CD8-positive, alpha-beta T cell (primary cell): ENCODE measurements at regions of chr13 and their contacts with region 1.

Region 1: GRCh38 chr13:73765651-73766384 is 368.4 kb downstream of the KLF12 start:
- DNase-seq: peak; percentile 65 to 94 (median 86)
- ATAC-seq: peak; percentile 89
- H3K4me3 ChIP-seq: peak overlapping the region; percentile 28 to 56
- H3K4me3 Mint-ChIP-seq: peak overlapping the region; percentile 81
- H3K27ac ChIP-seq: peak overlapping the region; percentile 73 to 86
- H3K27ac Mint-ChIP-seq: peak overlapping the region; percentile 98
- H3K4me1 ChIP-seq: peaks cover 77% of the 10 kb centered on the region
- H3K4me1 Mint-ChIP-seq: peaks cover 85% of the 10 kb centered on the region
- H3K27me3 ChIP-seq: no peaks in the 10 kb centered on the region
- H3K27me3 Mint-ChIP-seq: no peaks in the 10 kb centered on the region
- CTCF ChIP-seq: no peak

Region 2: GRCh38 chr13:73776151-73776785 is 10.4 kb after region 1 on chr13:
- CTCF ChIA-PET with region 1: interaction called, 20 read pairs
- POLR2A ChIA-PET with region 1: interaction called, 9 read pairs
- intact Hi-C with region 1: loop called in 1 of 2 experiments (anchors 1 kb)
- DNase-seq: no peak
- ATAC-seq: no peak
- H3K4me3 ChIP-seq: no peak overlapping the region
- H3K4me3 Mint-ChIP-seq: no peak overlapping the region
- H3K27ac ChIP-seq: no peak overlapping the region
- H3K27ac Mint-ChIP-seq: peak overlapping the region; percentile 24
- H3K4me1 ChIP-seq: peaks cover 13% of the 10 kb centered on the region
- H3K4me1 Mint-ChIP-seq: peaks cover 36% of the 10 kb centered on the region
- H3K27me3 ChIP-seq: no peaks in the 10 kb centered on the region
- H3K27me3 Mint-ChIP-seq: no peaks in the 10 kb centered on the region
- CTCF ChIP-seq: no peak

Region 3: DNA sequence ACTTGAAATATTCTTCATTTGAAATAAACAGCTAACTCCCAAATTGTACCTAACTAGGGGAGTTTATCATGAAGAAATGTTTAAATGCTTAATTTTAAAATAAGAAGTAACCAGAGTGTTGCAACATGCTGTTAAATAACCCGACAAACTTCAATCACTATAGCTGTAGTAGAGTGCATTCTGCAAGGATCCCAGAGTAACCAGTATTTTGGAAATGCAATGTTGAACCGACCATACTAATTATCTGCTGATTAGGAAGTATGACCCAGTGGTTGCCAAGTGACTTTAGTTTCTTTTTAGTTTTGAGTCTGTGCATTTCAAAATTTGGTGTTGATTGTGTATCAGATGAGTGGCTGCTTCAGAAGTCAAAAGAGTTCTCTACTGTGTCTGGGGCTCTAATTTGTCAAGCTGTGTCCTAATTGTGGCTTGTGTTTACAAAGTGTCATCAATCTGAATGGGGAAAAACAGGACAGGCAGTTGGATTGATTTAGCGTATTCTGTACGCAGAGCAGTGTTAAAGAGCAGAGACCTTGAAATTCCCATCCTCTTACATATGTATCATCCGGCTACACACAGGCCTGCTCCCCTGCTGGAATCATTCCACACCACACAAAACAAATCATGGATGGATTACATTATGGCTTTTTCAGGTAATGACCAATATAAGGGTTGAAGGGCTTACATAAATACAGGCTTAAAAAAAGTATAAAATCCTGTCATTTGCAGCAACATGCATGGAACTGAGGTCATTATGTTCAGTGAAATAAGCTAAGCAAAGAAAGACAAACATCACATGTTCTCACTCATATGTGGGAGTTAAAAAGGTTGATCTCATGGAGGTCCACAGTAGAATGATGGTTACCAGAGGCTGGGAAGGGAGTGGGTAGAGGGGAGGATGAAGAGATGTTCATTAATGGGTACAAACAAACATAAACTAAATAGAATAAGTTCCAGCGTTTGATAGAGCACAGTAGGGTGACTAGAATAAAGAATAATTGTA is 16.9 kb after region 1 on chr13:
- CTCF ChIA-PET with region 1: interaction called, 20 read pairs
- POLR2A ChIA-PET with region 1: interaction called, 6 read pairs
- intact Hi-C with region 1: loop called in 1 of 2 experiments (anchors 2 kb)
- DNase-seq: no peak
- ATAC-seq: no peak
- H3K4me3 ChIP-seq: no peak overlapping the region
- H3K4me3 Mint-ChIP-seq: no peak overlapping the region
- H3K27ac ChIP-seq: no peak overlapping the region
- H3K27ac Mint-ChIP-seq: peak overlapping the region; percentile 81
- H3K4me1 ChIP-seq: no peaks in the 10 kb centered on the region
- H3K4me1 Mint-ChIP-seq: peaks cover 41% of the 10 kb centered on the region
- H3K27me3 ChIP-seq: no peaks in the 10 kb centered on the region
- H3K27me3 Mint-ChIP-seq: no peaks in the 10 kb centered on the region
- CTCF ChIP-seq: no peak

Region 4: GRCh38 chr13:73816702-73817101 is 50.9 kb after region 1 on chr13:
- CTCF ChIA-PET with region 1: no interaction called
- POLR2A ChIA-PET with region 1: interaction called, 4 read pairs
- intact Hi-C with region 1: loop called in 1 of 2 experiments (anchors 10 kb)
- DNase-seq: no peak
- ATAC-seq: no peak
- H3K4me3 ChIP-seq: no peak overlapping the region
- H3K4me3 Mint-ChIP-seq: no peak overlapping the region
- H3K27ac ChIP-seq: no peak overlapping the region
- H3K27ac Mint-ChIP-seq: no peak overlapping the region
- H3K4me1 ChIP-seq: no peaks in the 10 kb centered on the region
- H3K4me1 Mint-ChIP-seq: peaks cover 55% of the 10 kb centered on the region
- H3K27me3 ChIP-seq: no peaks in the 10 kb centered on the region
- H3K27me3 Mint-ChIP-seq: no peaks in the 10 kb centered on the region
- CTCF ChIP-seq: no peak

Region 5: GRCh38 chr13:74062933-74063332 is 297.1 kb after region 1 on chr13:
- CTCF ChIA-PET with region 1: no interaction called
- POLR2A ChIA-PET with region 1: no interaction called
- intact Hi-C with region 1: loop called in 1 of 2 experiments (anchors 10 kb)
- DNase-seq: peak in 5 of 9 experiments; percentile 10 to 66 (median 30)
- ATAC-seq: peak; percentile 16
- H3K4me3 ChIP-seq: no peak overlapping the region
- H3K4me3 Mint-ChIP-seq: peak overlapping the region; percentile 30
- H3K27ac ChIP-seq: peak overlapping the region in 1 of 2 experiments; percentile 76
- H3K27ac Mint-ChIP-seq: peak overlapping the region; percentile 81
- H3K4me1 ChIP-seq: peaks cover 55% of the 10 kb centered on the region
- H3K4me1 Mint-ChIP-seq: peaks cover 85% of the 10 kb centered on the region
- H3K27me3 ChIP-seq: no peaks in the 10 kb centered on the region
- H3K27me3 Mint-ChIP-seq: no peaks in the 10 kb centered on the region
- CTCF ChIP-seq: no peak